Caco-2 (cell line): ENCODE measurements at regions of chr11 and their contacts with region 1.

Region 1: GRCh38 chr11:45110562-45110961 is 35.9 kb upstream of the PRDM11 start:
- DNase-seq: peak in 1 of 2 experiments; percentile 75
- H3K4me3 ChIP-seq: no peak overlapping the region
- H3K4me3 Mint-ChIP-seq: no peak overlapping the region
- H3K27ac Mint-ChIP-seq: no peak overlapping the region
- H3K4me1 ChIP-seq: peaks cover 9% of the 10 kb centered on the region; the same call in 1 of the 2 replicates
- H3K4me1 Mint-ChIP-seq: no peaks in the 10 kb centered on the region
- H3K27me3 ChIP-seq: no peaks in the 10 kb centered on the region
- H3K27me3 Mint-ChIP-seq: peaks cover 14% of the 10 kb centered on the region
- CTCF ChIP-seq: peak; percentile 74 to 86

Region 2: DNA sequence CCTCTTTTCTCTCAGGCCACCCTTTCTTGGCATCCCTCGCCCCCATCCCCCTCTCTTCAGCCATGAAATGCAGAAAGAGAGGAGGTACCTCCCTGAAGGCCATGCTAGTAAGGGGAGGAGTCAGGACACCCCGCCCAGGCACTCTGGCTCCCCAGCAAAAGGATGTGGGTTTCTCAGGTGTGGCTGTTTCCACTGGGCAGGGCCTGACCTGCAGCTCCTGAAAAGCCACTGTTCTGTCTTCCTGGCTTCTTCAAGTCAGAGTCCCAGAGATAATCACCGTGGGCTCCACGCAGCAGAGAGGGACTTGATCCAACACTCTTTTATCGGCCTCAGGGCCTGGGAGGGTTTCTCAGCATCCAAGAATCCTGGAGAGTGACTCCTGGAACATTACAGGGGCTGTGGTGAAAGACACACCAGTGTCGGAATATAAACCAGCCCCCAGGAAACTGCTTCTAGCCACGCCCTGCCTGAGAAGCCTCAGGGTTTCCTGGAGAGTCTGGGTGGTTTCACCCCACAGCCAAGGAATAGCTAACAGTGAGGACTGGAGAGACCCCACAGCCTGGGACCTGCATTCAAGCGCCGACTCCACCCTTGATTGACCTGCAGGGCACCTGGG is 429.5 kb before region 1 on chr11:
- CTCF ChIA-PET with region 1: no interaction called
- POLR2A ChIA-PET with region 1: no interaction called
- intact Hi-C with region 1: no loop called
- DNase-seq: no peak
- H3K4me3 ChIP-seq: no peak overlapping the region
- H3K4me3 Mint-ChIP-seq: no peak overlapping the region
- H3K27ac Mint-ChIP-seq: no peak overlapping the region
- H3K4me1 ChIP-seq: no peaks in the 10 kb centered on the region
- H3K4me1 Mint-ChIP-seq: no peaks in the 10 kb centered on the region
- H3K27me3 ChIP-seq: no peaks in the 10 kb centered on the region
- H3K27me3 Mint-ChIP-seq: peaks cover 6% of the 10 kb centered on the region
- CTCF ChIP-seq: no peak

Region 3: DNA sequence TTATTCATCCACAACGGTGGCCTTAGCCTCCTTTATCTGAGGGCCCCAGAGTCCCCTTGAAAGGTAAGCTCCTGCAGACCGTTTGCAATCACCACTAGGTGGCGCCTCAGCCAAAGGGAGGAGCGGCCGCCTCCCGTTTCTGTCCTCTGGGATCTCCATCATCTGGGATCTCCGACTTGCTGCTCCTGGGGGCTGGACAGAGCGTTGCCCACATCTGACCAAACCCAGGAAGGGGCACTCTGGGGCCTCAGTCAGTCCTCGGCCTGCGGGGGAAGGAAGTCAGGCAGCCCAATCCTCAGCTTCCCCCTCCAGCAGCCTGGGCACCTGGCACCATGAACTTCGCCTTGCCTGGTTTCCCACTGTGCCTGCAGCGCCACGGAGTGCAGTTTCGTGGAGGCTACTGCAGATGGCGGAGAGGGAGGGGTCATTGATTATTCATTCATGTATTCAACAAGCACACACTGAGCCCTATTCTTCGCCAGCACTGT is 183.3 kb before region 1 on chr11:
- CTCF ChIA-PET with region 1: interaction called, 54 read pairs
- POLR2A ChIA-PET with region 1: no interaction called
- intact Hi-C with region 1: loop called (anchors 1 kb)
- DNase-seq: peak; percentile 65 to 75
- H3K4me3 ChIP-seq: no peak overlapping the region
- H3K4me3 Mint-ChIP-seq: no peak overlapping the region
- H3K27ac Mint-ChIP-seq: no peak overlapping the region
- H3K4me1 ChIP-seq: peaks cover 17% of the 10 kb centered on the region
- H3K4me1 Mint-ChIP-seq: peaks cover 12% of the 10 kb centered on the region
- H3K27me3 ChIP-seq: no peaks in the 10 kb centered on the region
- H3K27me3 Mint-ChIP-seq: no peaks in the 10 kb centered on the region
- CTCF ChIP-seq: peak; percentile 88 to 89

Region 4: DNA sequence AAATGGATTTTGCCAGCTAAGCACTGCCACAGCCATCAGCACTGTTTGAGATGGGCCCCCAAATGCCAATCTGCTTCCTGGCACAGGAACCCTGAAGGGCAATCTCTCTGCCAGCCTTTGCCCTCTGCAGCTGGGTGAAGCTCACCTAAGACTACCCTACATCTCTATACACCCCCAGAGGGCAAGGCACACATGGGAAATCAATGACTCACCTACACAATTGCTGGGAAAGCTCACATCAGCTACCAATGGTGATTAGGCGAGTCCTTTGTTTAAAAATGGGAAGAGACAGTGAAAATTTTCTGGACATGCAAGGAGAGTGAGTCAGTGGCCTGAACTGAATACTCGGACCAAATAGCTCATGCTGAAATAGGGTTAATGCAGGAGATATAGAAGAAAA is 23.3 kb after region 1 on chr11:
- CTCF ChIA-PET with region 1: no interaction called
- POLR2A ChIA-PET with region 1: no interaction called
- intact Hi-C with region 1: no loop called
- DNase-seq: no peak
- H3K4me3 ChIP-seq: no peak overlapping the region
- H3K4me3 Mint-ChIP-seq: no peak overlapping the region
- H3K27ac Mint-ChIP-seq: no peak overlapping the region
- H3K4me1 ChIP-seq: no peaks in the 10 kb centered on the region
- H3K4me1 Mint-ChIP-seq: no peaks in the 10 kb centered on the region
- H3K27me3 ChIP-seq: no peaks in the 10 kb centered on the region; the same call in 1 of the 2 replicates
- H3K27me3 Mint-ChIP-seq: peaks cover 36% of the 10 kb centered on the region
- CTCF ChIP-seq: no peak

Region 5: GRCh38 chr11:45217991-45218390 is 107.4 kb after region 1 on chr11:
- CTCF ChIA-PET with region 1: no interaction called
- POLR2A ChIA-PET with region 1: no interaction called
- intact Hi-C with region 1: no loop called
- DNase-seq: no peak
- H3K4me3 ChIP-seq: no peak overlapping the region
- H3K4me3 Mint-ChIP-seq: no peak overlapping the region
- H3K27ac Mint-ChIP-seq: no peak overlapping the region
- H3K4me1 ChIP-seq: 0 out of 2 replicates have a peak, but pooled peaks cover 2% of the 10 kb centered on the region
- H3K4me1 Mint-ChIP-seq: no peaks in the 10 kb centered on the region
- H3K27me3 ChIP-seq: no peaks in the 10 kb centered on the region
- H3K27me3 Mint-ChIP-seq: no peaks in the 10 kb centered on the region
- CTCF ChIP-seq: no peak

Region 6: DNA sequence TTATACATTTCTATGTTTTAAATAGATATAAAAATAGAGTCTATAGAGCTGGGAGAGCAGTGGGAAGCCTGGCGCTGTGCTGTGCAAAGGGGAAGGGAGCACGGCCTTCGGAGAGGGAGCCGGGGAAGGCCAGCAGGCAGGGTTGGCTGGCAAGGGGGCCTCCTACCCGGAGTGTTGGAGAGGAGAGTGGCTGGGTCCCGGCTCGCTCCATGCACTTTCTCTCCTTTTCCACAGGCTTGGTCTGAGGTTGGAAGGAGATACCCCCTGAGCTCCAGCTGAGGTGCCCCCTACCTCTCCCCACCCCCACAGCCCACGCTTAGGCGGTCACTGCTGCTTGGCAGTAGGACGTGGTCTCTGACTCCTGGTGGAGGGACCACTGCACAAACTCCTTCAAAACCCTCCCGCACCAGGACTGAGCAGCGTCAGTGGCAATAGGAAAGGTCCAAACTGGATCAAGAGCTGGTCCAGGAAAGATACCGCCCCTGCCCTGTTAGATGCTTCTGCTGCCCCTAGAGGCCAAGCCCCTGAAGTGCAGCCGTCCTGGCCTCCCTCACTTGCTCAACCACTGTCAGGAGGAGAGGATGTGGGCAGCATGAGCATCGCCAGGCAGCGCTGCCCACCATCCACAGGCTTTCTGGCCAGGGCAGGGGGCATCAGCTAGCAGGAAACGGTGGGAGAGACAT is 122.7 kb after region 1 on chr11:
- CTCF ChIA-PET with region 1: interaction called, 9 read pairs
- POLR2A ChIA-PET with region 1: no interaction called
- intact Hi-C with region 1: loop called (anchors 5 kb)
- DNase-seq: peak; percentile 72 to 81
- H3K4me3 ChIP-seq: no peak overlapping the region
- H3K4me3 Mint-ChIP-seq: no peak overlapping the region
- H3K27ac Mint-ChIP-seq: no peak overlapping the region
- H3K4me1 ChIP-seq: no peaks in the 10 kb centered on the region
- H3K4me1 Mint-ChIP-seq: no peaks in the 10 kb centered on the region
- H3K27me3 ChIP-seq: no peaks in the 10 kb centered on the region
- H3K27me3 Mint-ChIP-seq: peaks cover 9% of the 10 kb centered on the region
- CTCF ChIP-seq: peak; percentile 78 to 85

Region 7: DNA sequence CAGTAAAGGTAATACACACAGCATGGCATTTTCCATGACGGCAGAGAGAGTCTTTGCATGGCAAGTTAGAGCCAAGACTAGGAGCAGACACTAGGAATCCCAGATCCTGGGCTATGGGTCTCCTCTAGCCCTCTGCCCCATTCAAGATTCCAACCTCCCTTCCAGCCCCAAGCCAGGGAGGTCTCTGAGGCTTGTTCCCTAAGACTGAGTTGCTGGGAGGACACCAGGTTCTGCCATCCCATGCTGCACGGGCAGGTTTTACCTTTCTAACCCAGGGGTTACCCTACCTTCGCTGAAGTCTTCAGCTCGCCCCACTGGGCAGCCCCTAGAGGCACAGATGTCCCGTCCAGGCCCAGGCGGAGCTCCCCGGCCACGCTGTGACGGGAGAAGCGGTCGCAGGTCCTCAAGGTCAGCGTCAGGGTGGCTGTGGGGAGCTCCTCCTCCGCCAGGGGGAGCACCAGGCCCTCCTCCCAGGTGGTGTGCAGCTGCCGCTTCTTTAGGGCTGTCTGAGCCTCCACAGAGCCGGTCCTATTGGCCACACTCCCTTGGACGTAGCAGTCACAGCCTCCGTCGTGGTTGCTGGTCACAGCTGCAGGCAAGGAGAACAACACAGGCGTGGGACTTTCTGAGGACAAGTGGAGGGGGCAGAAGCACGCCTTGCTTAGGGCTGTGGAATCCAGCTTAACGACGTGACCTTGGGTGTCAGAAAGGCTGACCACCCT is 141.7 kb after region 1 on chr11:
- CTCF ChIA-PET with region 1: interaction called, 8 read pairs
- POLR2A ChIA-PET with region 1: no interaction called
- intact Hi-C with region 1: loop called (anchors 1 kb)
- DNase-seq: peak; percentile 67 to 83
- H3K4me3 ChIP-seq: no peak overlapping the region
- H3K4me3 Mint-ChIP-seq: no peak overlapping the region
- H3K27ac Mint-ChIP-seq: no peak overlapping the region
- H3K4me1 ChIP-seq: no peaks in the 10 kb centered on the region
- H3K4me1 Mint-ChIP-seq: no peaks in the 10 kb centered on the region
- H3K27me3 ChIP-seq: no peaks in the 10 kb centered on the region
- H3K27me3 Mint-ChIP-seq: peaks cover 6% of the 10 kb centered on the region
- CTCF ChIP-seq: peak; percentile 82 to 91

Region 8: GRCh38 chr11:45332276-45332934 is 221.8 kb after region 1 on chr11:
- CTCF ChIA-PET with region 1: interaction called, 20 read pairs
- POLR2A ChIA-PET with region 1: no interaction called
- intact Hi-C with region 1: loop called (anchors 1 kb)
- DNase-seq: peak in 1 of 2 experiments; percentile 55
- H3K4me3 ChIP-seq: no peak overlapping the region
- H3K4me3 Mint-ChIP-seq: no peak overlapping the region
- H3K27ac Mint-ChIP-seq: no peak overlapping the region
- H3K4me1 ChIP-seq: no peaks in the 10 kb centered on the region
- H3K4me1 Mint-ChIP-seq: no peaks in the 10 kb centered on the region
- H3K27me3 ChIP-seq: no peaks in the 10 kb centered on the region; the same call in 1 of the 2 replicates
- H3K27me3 Mint-ChIP-seq: peaks cover 12% of the 10 kb centered on the region
- CTCF ChIP-seq: peak; percentile 70 to 91